ENCODE measurements at regions of chr19 and their contacts with region 1.

Region 1: DNA sequence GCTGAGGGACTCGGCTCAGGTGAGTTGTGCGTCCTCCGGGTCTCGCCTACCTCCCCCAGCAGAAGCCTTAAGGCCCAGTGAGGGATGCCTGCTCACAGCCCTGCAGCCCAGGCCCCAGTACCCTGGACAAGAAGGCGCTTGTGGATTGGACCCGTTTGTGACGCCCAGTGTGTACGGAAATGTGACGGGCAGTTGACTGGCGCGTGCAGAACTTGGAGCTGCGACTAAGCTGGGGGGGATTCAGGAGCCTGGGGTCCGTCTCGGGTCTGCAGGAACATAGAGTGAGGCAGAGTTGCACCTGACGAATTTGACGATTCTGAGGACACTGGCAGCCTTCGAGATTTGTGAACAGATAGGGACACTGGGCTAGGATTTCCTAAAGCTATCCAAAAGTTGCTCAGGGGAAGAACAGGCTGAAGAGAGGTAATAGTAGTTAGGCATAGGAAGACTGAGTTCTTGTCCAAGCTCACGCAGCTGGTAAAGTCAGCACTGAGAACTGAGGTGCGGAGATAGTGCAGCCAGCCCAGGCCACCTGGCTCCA is 519 bp downstream of the ZNF551 start:
- DNase-seq: no peak
- ATAC-seq: no peak
- H3K4me3 ChIP-seq: peak overlapping the region; percentile 84
- H3K4me3 Mint-ChIP-seq: peak overlapping the region; percentile 95
- H3K27ac ChIP-seq: peak overlapping the region; percentile 42
- H3K27ac Mint-ChIP-seq: peak overlapping the region; percentile 85 to 90
- H3K4me1 ChIP-seq: peaks cover 22% of the 10 kb centered on the region
- H3K4me1 Mint-ChIP-seq: peaks cover 30 to 44% of the 10 kb centered on the region in 2 donors
- H3K27me3 ChIP-seq: no peaks in the 10 kb centered on the region
- H3K27me3 Mint-ChIP-seq: peaks cover 4 to 9% of the 10 kb centered on the region in 2 donors
- CTCF ChIP-seq: no peak

Region 2: DNA sequence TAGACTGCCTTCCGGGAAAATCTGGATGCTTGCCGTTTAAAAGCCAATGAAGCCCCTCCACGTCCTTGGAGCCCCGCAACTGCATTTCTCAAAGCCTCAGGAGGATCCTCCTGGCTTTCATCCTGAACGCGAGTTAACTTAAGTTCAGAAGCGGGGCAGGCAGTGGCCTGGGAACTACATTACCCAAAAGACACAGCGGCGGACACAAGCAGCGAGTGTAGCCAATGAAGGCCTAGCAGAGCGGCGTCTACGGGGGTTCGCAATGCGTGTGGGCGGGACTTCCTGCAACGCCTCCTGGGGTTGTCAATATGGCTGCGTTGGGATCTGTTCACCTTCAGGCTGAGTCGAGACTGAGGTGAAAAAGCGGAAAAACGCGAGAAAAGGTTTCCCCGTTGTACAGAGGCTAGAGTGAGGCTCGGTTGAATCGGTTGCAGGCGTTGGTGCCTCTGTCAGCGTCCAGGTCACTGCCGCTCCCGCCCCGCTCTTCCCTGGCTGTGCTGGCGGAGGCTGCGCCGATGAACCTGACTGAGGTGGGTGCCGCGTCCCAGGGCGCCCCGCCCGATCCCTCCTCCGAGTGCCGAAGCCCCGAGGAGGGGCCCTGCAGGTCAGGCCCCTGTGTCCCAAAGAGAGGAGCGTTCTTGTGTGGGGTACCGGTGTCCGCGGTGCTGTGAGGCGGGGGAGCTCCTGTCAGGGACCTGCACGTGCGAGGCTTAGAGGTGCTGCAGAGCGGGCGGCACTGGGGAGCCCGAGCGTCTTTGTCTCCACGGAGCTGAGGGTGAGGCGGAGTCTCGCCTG is 271.2 kb before region 1 on chr19 and contains the start of gene ZNF17:
- intact Hi-C with region 1: loop called (anchors 5 kb)
- DNase-seq: peak; percentile 84 to 96
- ATAC-seq: peak; percentile 99 to 100 (median 100)
- H3K4me3 ChIP-seq: peak within 1 kb of the TSS; percentile 86
- H3K4me3 Mint-ChIP-seq: peak within 1 kb of the TSS; percentile 94
- H3K27ac ChIP-seq: peak within 1 kb of the TSS; percentile 62
- H3K27ac Mint-ChIP-seq: peak within 1 kb of the TSS; percentile 84
- H3K4me1 ChIP-seq: peaks cover 18% of the 10 kb centered on the region
- H3K4me1 Mint-ChIP-seq: peaks cover 29 to 37% of the 10 kb centered on the region in 2 donors
- H3K27me3 ChIP-seq: no peaks in the 10 kb centered on the region
- H3K27me3 Mint-ChIP-seq: no peaks in the 10 kb centered on the region
- CTCF ChIP-seq: no peak
- total RNA-seq, gene ZNF17: 13.0 to 15.0 (median 13.3) TPM

Region 3: GRCh38 chr19:57435062-57435978 is 247.0 kb before region 1 on chr19 and contains the start of gene ZNF749:
- intact Hi-C with region 1: loop called (anchors 1 kb)
- DNase-seq: peak; percentile 92 to 99
- ATAC-seq: peak; percentile 99 to 100 (median 100)
- H3K4me3 ChIP-seq: peak within 1 kb of the TSS; percentile 62
- H3K4me3 Mint-ChIP-seq: peak within 1 kb of the TSS; percentile 99
- H3K27ac ChIP-seq: peak within 1 kb of the TSS; percentile 70
- H3K27ac Mint-ChIP-seq: peak within 1 kb of the TSS; percentile 87 to 88
- H3K4me1 ChIP-seq: peaks cover 14% of the 10 kb centered on the region
- H3K4me1 Mint-ChIP-seq: peaks cover 21 to 41% of the 10 kb centered on the region in 2 donors
- H3K27me3 ChIP-seq: no peaks in the 10 kb centered on the region
- H3K27me3 Mint-ChIP-seq: peaks cover 0 to 2% of the 10 kb centered on the region in 2 donors
- CTCF ChIP-seq: no peak
- total RNA-seq, gene ZNF749: 7.0 to 9.8 (median 7.8) TPM

Region 4: DNA sequence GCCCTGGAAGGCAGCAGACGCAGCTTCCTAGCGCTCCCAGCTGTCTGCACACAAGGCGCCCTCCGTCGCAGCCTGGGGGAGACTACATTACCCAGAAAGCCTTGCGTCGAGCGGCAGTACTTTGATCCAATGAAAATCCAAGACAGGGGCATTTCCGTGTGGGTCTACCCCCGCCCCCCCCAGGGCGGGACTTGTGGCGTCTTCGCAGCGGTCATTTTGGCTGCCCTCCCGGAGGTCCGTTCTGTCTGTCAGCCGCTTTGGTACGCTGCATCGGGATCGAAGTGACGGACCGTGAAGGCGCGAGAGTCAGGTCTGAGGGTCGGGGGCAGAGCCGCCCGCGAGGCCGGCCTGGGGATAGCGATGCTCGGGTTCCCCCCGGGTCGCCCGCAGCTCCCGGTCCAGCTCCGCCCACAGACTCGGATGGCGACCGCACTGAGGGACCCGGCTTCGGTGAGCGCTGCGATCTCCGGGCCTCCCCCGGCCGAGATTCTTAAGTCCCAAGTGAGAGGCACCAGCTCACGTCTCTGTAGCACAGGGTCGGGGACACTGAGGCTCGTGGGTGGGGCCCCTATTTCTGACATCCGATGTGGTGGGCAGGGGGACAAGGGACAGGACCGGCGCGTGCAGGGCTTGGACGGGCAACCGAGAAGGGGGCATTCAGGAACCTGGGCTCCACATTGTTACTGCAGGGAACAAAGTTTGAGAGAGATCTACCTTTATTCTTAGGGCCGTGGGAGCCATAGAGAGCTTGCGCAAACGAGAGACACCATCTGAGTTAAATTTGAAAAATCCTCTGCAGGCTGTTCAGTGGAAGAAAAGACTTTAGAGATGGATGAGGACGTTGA is 49.1 kb before region 1 on chr19 and contains the start of gene ZNF211:
- intact Hi-C with region 1: loop called (anchors 10 kb)
- DNase-seq: peak; percentile 89 to 94
- ATAC-seq: peak; percentile 99 to 100 (median 100)
- H3K4me3 ChIP-seq: peak within 1 kb of the TSS; percentile 83
- H3K4me3 Mint-ChIP-seq: peak within 1 kb of the TSS; percentile 94
- H3K27ac ChIP-seq: peak within 1 kb of the TSS; percentile 80
- H3K27ac Mint-ChIP-seq: peak within 1 kb of the TSS; percentile 87 to 91
- H3K4me1 ChIP-seq: peaks cover 13% of the 10 kb centered on the region
- H3K4me1 Mint-ChIP-seq: peaks cover 24 to 32% of the 10 kb centered on the region in 2 donors
- H3K27me3 ChIP-seq: no peaks in the 10 kb centered on the region
- H3K27me3 Mint-ChIP-seq: no peaks in the 10 kb centered on the region
- CTCF ChIP-seq: no peak
- total RNA-seq, gene ZNF211: 33.7 to 47.0 (median 36.9) TPM

Region 5: DNA sequence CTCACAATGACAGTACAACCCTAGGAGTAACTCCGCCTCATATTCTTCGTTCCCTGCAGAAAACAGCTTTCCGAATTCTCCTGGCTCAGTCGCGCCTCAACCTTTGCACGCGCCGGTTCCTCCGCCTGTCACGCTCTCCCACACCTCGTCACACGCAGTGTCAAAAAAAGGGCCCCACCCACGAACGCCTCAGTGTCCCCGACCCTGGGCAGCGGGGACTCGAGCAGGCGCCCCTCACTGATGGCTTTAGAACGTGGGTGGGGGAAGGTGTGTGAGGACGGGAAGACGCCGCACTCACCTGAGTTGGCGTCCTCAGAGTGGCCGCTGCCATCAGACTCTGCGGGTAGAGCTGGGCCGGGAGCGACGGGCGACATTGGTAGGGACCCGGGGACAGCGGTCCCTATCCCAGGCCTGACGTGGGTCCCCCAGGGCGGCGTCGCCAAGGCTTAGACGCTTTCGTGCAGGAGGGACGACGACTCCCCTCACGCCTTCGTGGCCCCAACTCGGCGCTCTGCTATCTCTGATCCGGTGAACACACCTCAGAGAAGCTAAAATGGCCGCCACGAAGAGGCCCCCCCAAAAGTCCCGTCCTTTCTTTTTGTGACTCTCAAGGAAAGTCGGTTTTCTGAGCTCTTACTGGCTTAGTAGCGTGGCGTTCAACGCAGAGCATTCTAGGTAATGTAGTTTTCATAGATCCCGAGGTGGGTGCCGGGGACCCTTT is 26.5 kb after region 1 on chr19 and contains the start of gene ZNF154:
- intact Hi-C with region 1: loop called (anchors 2 kb)
- DNase-seq: peak; percentile 54 to 63
- ATAC-seq: peak; percentile 67 to 89 (median 87)
- H3K4me3 ChIP-seq: peak within 1 kb of the TSS; percentile 56
- H3K4me3 Mint-ChIP-seq: peak within 1 kb of the TSS; percentile 86
- H3K27ac ChIP-seq: peak within 1 kb of the TSS; percentile 90
- H3K27ac Mint-ChIP-seq: peak within 1 kb of the TSS; percentile 83 to 99
- H3K4me1 ChIP-seq: peaks cover 14% of the 10 kb centered on the region
- H3K4me1 Mint-ChIP-seq: peaks cover 7 to 53% of the 10 kb centered on the region in 2 donors
- H3K27me3 ChIP-seq: no peaks in the 10 kb centered on the region
- H3K27me3 Mint-ChIP-seq: no peaks in the 10 kb centered on the region
- CTCF ChIP-seq: no peak
- total RNA-seq, gene ZNF154: 4.2 to 21.6 (median 9.5) TPM

Region 6: GRCh38 chr19:57719901-57720519 is 37.7 kb after region 1 on chr19:
- intact Hi-C with region 1: no loop called
- DNase-seq: no peak
- ATAC-seq: no peak
- H3K4me3 ChIP-seq: no peak overlapping the region
- H3K4me3 Mint-ChIP-seq: no peak overlapping the region
- H3K27ac ChIP-seq: no peak overlapping the region
- H3K27ac Mint-ChIP-seq: no peak overlapping the region
- H3K4me1 ChIP-seq: no peaks in the 10 kb centered on the region
- H3K4me1 Mint-ChIP-seq: peaks cover 5 to 14% of the 10 kb centered on the region in 2 donors
- H3K27me3 ChIP-seq: no peaks in the 10 kb centered on the region
- H3K27me3 Mint-ChIP-seq: no peaks in the 10 kb centered on the region
- CTCF ChIP-seq: no peak

Region 7: DNA sequence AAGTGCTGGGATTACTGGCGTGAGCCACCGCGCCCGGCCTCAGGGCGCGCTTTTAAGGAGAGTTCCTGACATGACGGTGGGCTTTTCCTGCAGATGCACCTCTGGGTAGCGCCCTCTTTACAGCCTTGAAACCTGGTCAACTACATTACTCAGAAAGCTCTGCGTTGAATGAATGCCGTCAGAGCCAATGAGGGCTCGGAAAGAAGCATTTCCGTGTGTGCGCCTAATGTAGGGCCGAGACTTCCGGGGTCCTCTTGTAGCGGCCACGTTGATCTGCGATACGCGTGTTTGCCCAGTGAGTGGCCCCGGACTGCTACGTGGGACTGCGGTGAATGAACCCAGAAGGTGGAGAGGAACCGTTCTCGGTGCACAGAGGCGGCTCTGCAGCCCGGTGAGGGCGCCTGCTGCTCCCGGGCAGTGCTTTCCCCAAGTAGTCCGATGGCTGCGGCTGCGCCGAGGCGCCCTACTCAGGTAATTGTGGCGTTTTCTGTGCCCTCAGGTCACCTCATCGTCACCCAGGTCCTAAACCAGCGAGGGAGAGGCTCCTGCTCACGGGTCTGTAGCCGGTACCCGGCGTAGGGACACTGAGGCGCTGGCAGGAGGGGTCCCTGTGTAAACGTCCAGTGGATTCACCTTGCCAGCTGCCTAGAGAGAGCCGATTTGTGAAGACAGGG is 137.3 kb after region 1 on chr19:
- intact Hi-C with region 1: loop called (anchors 5 kb)
- DNase-seq: peak; percentile 74 to 93
- ATAC-seq: peak; percentile 83 to 91 (median 85)
- H3K4me3 ChIP-seq: peak overlapping the region; percentile 91
- H3K4me3 Mint-ChIP-seq: peak overlapping the region; percentile 94
- H3K27ac ChIP-seq: peak overlapping the region; percentile 81
- H3K27ac Mint-ChIP-seq: peak overlapping the region; percentile 96 to 97
- H3K4me1 ChIP-seq: peaks cover 20% of the 10 kb centered on the region
- H3K4me1 Mint-ChIP-seq: peaks cover 43 to 46% of the 10 kb centered on the region in 2 donors
- H3K27me3 ChIP-seq: no peaks in the 10 kb centered on the region
- H3K27me3 Mint-ChIP-seq: no peaks in the 10 kb centered on the region
- CTCF ChIP-seq: no peak

Measured in natural killer cell (primary cell).